ENCODE measurements at regions of chr20 and their contacts with region 1.

Region 1: GRCh38 chr20:2172305-2173175 is 70.9 kb downstream of the STK35 start:
- DNase-seq: peak; percentile 46 to 64 (median 57)
- H3K4me3 ChIP-seq: no peak overlapping the region
- H3K4me3 Mint-ChIP-seq: peak overlapping the region in 1 of 2 donors; percentile 76
- H3K27ac ChIP-seq: no peak overlapping the region
- H3K27ac Mint-ChIP-seq: peak overlapping the region in 1 of 7 donors; percentile 58
- H3K4me1 ChIP-seq: no peaks in the 10 kb centered on the region
- H3K4me1 Mint-ChIP-seq: peaks cover 8% of the 10 kb centered on the region
- H3K27me3 ChIP-seq: no peaks in the 10 kb centered on the region
- H3K27me3 Mint-ChIP-seq: peaks cover 7 to 21% (median 16%) of the 10 kb centered on the region in 3 donors
- CTCF ChIP-seq: peak; percentile 80

Region 2: GRCh38 chr20:1764136-1765033 is 408.2 kb before region 1 on chr20:
- intact Hi-C with region 1: loop called (anchors 5 kb)
- DNase-seq: peak; percentile 62 to 71 (median 65)
- H3K4me3 ChIP-seq: no peak overlapping the region
- H3K4me3 Mint-ChIP-seq: peak overlapping the region in 1 of 2 donors; percentile 18
- H3K27ac ChIP-seq: no peak overlapping the region
- H3K27ac Mint-ChIP-seq: no peak overlapping the region
- H3K4me1 ChIP-seq: peaks cover 2 to 6% of the 10 kb centered on the region in 2 donors
- H3K4me1 Mint-ChIP-seq: peaks cover 19% of the 10 kb centered on the region
- H3K27me3 ChIP-seq: no peaks in the 10 kb centered on the region
- H3K27me3 Mint-ChIP-seq: peaks cover 0 to 5% (median 5%) of the 10 kb centered on the region in 3 donors
- CTCF ChIP-seq: peak; percentile 95

Region 3: GRCh38 chr20:2005831-2006426 is 166.6 kb before region 1 on chr20:
- intact Hi-C with region 1: loop called (anchors 2 to 5 kb)
- DNase-seq: peak; percentile 44 to 60 (median 50)
- H3K4me3 ChIP-seq: no peak overlapping the region
- H3K4me3 Mint-ChIP-seq: no peak overlapping the region
- H3K27ac ChIP-seq: no peak overlapping the region
- H3K27ac Mint-ChIP-seq: no peak overlapping the region
- H3K4me1 ChIP-seq: no peaks in the 10 kb centered on the region
- H3K4me1 Mint-ChIP-seq: peaks cover 1% of the 10 kb centered on the region
- H3K27me3 ChIP-seq: peaks cover 2 to 6% of the 10 kb centered on the region in 2 donors
- H3K27me3 Mint-ChIP-seq: peaks cover 9 to 16% (median 14%) of the 10 kb centered on the region in 3 donors
- CTCF ChIP-seq: no peak

Region 4: GRCh38 chr20:2133318-2134183 is 39.0 kb before region 1 on chr20:
- intact Hi-C with region 1: no loop called
- DNase-seq: no peak
- H3K4me3 ChIP-seq: no peak overlapping the region
- H3K4me3 Mint-ChIP-seq: no peak overlapping the region
- H3K27ac ChIP-seq: no peak overlapping the region
- H3K27ac Mint-ChIP-seq: peak overlapping the region in 3 of 7 donors; percentile 1 to 65 (median 59)
- H3K4me1 ChIP-seq: no peaks in the 10 kb centered on the region
- H3K4me1 Mint-ChIP-seq: peaks cover 18% of the 10 kb centered on the region
- H3K27me3 ChIP-seq: no peaks in the 10 kb centered on the region
- H3K27me3 Mint-ChIP-seq: peaks cover 0 to under 1% (median 0%) of the 10 kb centered on the region in 3 donors
- CTCF ChIP-seq: no peak

Region 5: DNA sequence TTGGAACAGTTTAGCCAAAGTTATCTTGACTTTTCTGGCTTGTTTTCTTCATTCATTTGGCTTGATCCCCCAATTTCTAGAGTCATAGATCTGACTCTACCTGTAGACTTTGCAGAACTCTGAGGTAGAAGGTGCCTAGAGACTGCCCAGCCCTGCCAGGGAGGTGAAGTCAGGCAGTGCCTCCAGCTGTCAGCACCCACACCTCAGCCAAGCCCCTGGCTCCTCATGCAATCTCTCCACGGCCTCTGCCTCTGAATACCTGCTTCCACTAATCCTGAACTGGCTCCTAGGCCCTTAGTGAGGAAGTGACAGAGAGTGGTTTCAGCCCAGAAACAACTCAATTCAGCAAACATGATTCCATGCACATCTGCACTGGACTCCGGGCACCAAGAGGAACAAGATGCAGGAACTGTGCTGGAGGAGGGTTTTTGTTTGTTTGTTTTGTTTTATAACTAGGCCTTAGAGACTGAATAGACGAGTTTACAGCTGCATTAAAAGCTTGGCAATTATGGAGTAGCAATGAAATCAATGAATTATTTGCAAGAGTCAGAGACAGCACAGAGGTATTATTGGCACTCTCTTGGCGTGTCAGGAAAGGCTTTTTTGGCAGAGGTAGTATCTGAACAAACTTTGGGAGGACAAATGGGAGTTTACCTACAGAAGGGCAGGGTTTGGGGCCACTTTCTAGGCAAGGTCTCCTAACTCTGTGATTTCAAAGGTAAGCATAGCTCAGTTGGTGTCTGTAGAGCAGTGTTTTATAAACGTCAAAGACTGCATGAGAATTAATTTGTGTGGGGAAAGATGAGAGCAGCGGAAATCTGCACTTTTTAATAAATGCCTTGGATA is 148.5 kb after region 1 on chr20:
- intact Hi-C with region 1: no loop called
- DNase-seq: no peak
- H3K4me3 ChIP-seq: no peak overlapping the region
- H3K4me3 Mint-ChIP-seq: no peak overlapping the region
- H3K27ac ChIP-seq: no peak overlapping the region
- H3K27ac Mint-ChIP-seq: peak overlapping the region in 1 of 7 donors; percentile 20
- H3K4me1 ChIP-seq: peaks cover 2 to 3% of the 10 kb centered on the region in 2 donors
- H3K4me1 Mint-ChIP-seq: peaks cover 5% of the 10 kb centered on the region
- H3K27me3 ChIP-seq: peaks cover 4 to 11% of the 10 kb centered on the region in 2 donors
- H3K27me3 Mint-ChIP-seq: peaks cover 22 to 24% (median 23%) of the 10 kb centered on the region in 3 donors
- CTCF ChIP-seq: no peak